ENCODE measurements at regions of chr15 and their contacts with region 1.

Region 1: DNA sequence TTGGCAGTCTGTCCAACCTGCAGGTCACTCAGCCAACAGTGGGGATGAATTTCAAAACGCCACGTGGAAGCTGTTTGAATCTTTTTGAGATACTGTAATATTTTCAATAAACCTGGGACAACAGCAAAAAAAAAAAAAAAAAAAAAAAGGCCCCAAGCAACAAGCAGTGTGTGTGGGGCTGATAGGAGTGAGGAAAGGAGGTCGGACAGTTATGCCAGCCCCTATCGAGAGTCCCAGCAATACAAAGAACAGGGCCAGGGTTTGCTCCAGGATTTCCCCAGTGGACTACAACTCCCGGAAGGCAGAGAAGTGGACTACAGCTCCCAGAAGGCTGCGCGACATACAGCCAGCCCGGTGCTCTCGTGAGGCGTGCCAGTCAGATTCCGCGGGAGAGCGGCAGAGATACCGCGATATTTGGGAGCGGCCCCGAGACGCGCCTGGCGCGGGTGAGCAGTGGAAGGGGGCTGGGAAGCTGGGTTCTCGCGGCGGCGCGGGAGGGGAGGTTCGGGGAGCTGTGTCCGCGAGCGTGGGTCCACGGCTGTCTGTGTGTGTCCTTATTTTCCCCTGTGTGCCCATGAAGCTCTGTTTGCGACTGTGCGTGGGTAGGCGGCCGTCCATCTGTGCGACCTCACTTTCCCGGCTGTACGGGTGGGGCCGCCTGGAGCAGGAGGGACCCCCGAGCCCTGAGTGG is at the start of gene PPCDC:
- DNase-seq: peak; percentile 79 to 94 (median 91)
- ATAC-seq: peak; percentile 100
- H3K4me3 ChIP-seq: peak within 1 kb of the TSS; percentile 84
- H3K4me3 Mint-ChIP-seq: peak within 1 kb of the TSS; percentile 81 to 99 (median 97)
- H3K27ac ChIP-seq: peak within 1 kb of the TSS; percentile 84
- H3K27ac Mint-ChIP-seq: peak within 1 kb of the TSS; percentile 87 to 98 (median 93)
- H3K4me1 ChIP-seq: no peaks in the 10 kb centered on the region
- H3K4me1 Mint-ChIP-seq: peaks cover 11 to 30% (median 26%) of the 10 kb centered on the region in 7 donors
- H3K27me3 ChIP-seq: no peaks in the 10 kb centered on the region
- H3K27me3 Mint-ChIP-seq: no peaks in the 10 kb centered on the region
- total RNA-seq, gene PPCDC: 11.7 to 31.3 (median 17.1) TPM

Region 2: DNA sequence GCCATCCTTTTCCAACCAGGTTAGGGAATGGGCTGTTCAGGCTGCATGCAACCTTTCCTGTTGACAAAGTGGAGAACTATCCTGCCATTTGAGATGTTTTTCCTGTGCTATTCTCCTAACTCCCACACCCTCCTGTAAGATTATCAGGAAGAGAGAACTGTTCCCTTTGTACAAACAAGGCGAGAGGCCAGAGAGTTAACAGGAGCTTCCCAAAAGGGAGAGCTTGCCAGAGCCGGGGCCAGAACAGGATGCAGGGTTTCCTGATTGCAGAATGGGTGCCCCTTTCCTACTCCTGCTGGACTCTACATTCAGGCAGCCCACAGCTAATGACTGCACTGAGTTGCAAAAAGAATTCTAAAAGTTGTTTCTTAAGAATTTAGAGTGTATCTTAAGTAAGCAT is 1011.7 kb before region 1 on chr15:
- CTCF ChIA-PET with region 1: no interaction called
- POLR2A ChIA-PET with region 1: no interaction called
- intact Hi-C with region 1: no loop called
- DNase-seq: no peak
- ATAC-seq: no peak
- H3K4me3 ChIP-seq: no peak overlapping the region
- H3K4me3 Mint-ChIP-seq: peak overlapping the region in 3 of 10 donors; percentile 10 to 29 (median 20)
- H3K27ac ChIP-seq: no peak overlapping the region
- H3K27ac Mint-ChIP-seq: peak overlapping the region in 2 of 9 donors; percentile 39 to 56
- H3K4me1 ChIP-seq: peaks cover 11 to 33% of the 10 kb centered on the region in 2 donors
- H3K4me1 Mint-ChIP-seq: peaks cover 36 to 84% (median 74%) of the 10 kb centered on the region in 7 donors
- H3K27me3 ChIP-seq: no peaks in the 10 kb centered on the region
- H3K27me3 Mint-ChIP-seq: no peaks in the 10 kb centered on the region

Region 3: DNA sequence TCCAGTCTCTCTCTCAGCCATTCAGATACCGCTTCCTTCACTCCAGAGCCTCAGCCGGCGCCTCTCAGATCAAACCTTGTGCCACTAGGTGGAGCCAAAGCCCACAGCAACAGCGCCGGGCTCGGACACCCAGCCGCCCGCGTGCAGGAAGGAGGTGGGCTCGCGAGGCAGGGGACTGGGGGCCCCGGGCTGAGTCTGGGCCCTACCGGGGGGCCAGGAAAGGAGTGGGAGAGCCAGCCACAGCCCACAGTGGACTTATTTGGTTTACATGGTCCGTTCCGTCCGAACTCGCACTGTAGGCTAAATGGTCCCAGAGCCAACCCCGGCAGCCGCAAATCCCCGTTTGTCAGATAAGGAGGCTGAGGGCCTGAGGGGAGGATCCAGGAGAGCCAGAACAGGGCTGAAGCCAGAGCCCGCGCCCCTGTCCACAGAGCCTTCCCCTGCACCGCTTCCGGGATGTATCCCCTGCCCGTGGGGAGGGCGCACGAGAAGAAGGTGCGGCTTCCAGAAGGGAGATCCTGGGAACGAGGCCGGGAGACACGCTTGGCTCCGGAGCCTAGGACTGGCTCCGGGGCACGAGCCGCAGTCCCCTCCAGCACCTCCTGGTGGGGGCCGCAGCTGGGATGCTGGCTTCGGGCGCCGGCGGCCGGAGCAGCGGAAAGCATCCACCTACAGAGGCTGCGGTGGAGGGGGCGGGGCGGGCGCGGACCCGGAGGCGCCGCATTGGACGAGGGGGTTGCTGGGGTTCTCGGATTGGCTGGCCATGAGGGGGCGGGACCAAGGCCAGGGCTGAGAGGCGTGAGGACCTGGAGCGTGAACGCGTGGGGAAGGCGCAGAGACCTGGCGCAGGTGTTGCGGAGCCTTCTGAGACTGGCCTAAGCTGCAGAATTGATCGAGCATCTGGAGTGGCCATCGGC is 649.3 kb before region 1 on chr15:
- CTCF ChIA-PET with region 1: no interaction called
- POLR2A ChIA-PET with region 1: no interaction called
- intact Hi-C with region 1: loop called in 1 of 2 experiments (anchors 2 kb)
- DNase-seq: peak; percentile 82 to 94 (median 91)
- ATAC-seq: peak; percentile 97
- H3K4me3 ChIP-seq: peak overlapping the region; percentile 98
- H3K4me3 Mint-ChIP-seq: peak overlapping the region; percentile 68 to 89 (median 84)
- H3K27ac ChIP-seq: peak overlapping the region; percentile 62
- H3K27ac Mint-ChIP-seq: peak overlapping the region; percentile 18 to 82 (median 40)
- H3K4me1 ChIP-seq: peaks cover 9% of the 10 kb centered on the region in 2 donors
- H3K4me1 Mint-ChIP-seq: peaks cover 0 to 32% (median 15%) of the 10 kb centered on the region in 7 donors
- H3K27me3 ChIP-seq: no peaks in the 10 kb centered on the region
- H3K27me3 Mint-ChIP-seq: peaks cover 0 to 31% (median 5%) of the 10 kb centered on the region in 5 donors

Region 4: GRCh38 chr15:74842581-74843444 is 180.5 kb before region 1 on chr15 and contains the start of gene ULK3:
- CTCF ChIA-PET with region 1: no interaction called
- POLR2A ChIA-PET with region 1: no interaction called
- intact Hi-C with region 1: loop called in 1 of 2 experiments (anchors 2 kb)
- DNase-seq: peak; percentile 89 to 97 (median 93)
- ATAC-seq: peak; percentile 97
- H3K4me3 ChIP-seq: peak within 1 kb of the TSS; percentile 74
- H3K4me3 Mint-ChIP-seq: peak within 1 kb of the TSS; percentile 80 to 95 (median 90)
- H3K27ac ChIP-seq: peak within 1 kb of the TSS; percentile 79
- H3K27ac Mint-ChIP-seq: peak within 1 kb of the TSS; percentile 88 to 95 (median 94)
- H3K4me1 ChIP-seq: peaks cover 40 to 50% of the 10 kb centered on the region in 2 donors
- H3K4me1 Mint-ChIP-seq: peaks cover 26 to 62% (median 50%) of the 10 kb centered on the region in 7 donors
- H3K27me3 ChIP-seq: no peaks in the 10 kb centered on the region
- H3K27me3 Mint-ChIP-seq: no peaks in the 10 kb centered on the region
- total RNA-seq, gene ULK3: 53.2 to 106 (median 59.2) TPM

Region 5: DNA sequence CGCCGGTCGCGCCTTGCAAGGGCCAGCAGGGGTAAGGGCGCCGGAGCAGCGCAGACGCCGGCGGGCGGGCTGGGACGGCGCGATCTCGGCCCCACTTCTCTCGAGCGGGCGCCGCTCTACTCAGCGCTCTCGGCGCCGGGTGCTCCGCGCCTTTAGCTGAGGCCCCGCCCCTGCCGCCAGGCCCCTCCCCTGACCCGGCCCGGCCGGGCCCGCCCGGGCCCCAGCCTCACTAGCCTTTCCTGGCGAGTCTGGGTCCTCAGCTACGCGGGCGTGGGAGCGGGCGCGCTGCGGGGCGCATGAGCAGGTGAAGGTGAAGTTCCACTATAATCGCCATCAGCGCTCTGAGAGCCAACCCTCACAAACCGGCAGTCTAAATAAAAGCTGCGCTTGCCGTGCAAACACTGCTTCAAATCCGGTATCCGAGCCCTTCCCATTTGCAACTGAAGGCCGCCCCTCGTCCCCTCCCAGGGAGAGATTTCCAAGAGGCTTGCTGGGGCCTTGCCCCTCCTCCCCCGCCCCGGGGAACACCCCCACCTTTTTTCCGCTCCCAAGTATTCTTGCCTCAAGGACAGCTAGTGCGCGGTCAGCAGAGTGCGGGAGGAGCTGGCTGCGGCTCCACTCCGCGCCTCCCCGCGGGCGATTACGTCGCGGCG is 66.6 kb before region 1 on chr15 and contains the start of gene RPP25:
- CTCF ChIA-PET with region 1: no interaction called
- POLR2A ChIA-PET with region 1: no interaction called
- intact Hi-C with region 1: loop called in 1 of 2 experiments (anchors 1 kb)
- DNase-seq: peak; percentile 32 to 82 (median 49)
- ATAC-seq: peak; percentile 92
- H3K4me3 ChIP-seq: peak within 1 kb of the TSS; percentile 67
- H3K4me3 Mint-ChIP-seq: peak within 1 kb of the TSS; percentile 68 to 83 (median 81)
- H3K27ac ChIP-seq: peak within 1 kb of the TSS; percentile 1
- H3K27ac Mint-ChIP-seq: no peak within 1 kb of the TSS
- H3K4me1 ChIP-seq: peaks cover 17 to 23% of the 10 kb centered on the region in 2 donors
- H3K4me1 Mint-ChIP-seq: peaks cover 14 to 40% (median 31%) of the 10 kb centered on the region in 7 donors
- H3K27me3 ChIP-seq: peaks cover 9 to 10% of the 10 kb centered on the region in 2 donors
- H3K27me3 Mint-ChIP-seq: peaks cover 25 to 47% (median 27%) of the 10 kb centered on the region in 5 donors
- total RNA-seq, gene RPP25: 0.95 to 5.8 (median 3.3) TPM

Region 6: GRCh38 chr15:75069301-75069925 is 46.1 kb after region 1 on chr15:
- CTCF ChIA-PET with region 1: no interaction called
- POLR2A ChIA-PET with region 1: no interaction called
- intact Hi-C with region 1: no loop called
- DNase-seq: no peak
- ATAC-seq: peak; percentile 84
- H3K4me3 ChIP-seq: no peak overlapping the region
- H3K4me3 Mint-ChIP-seq: peak overlapping the region in 1 of 10 donors; percentile 70
- H3K27ac ChIP-seq: no peak overlapping the region
- H3K27ac Mint-ChIP-seq: peak overlapping the region in 3 of 9 donors; percentile 33 to 97 (median 67)
- H3K4me1 ChIP-seq: peaks cover 12 to 24% of the 10 kb centered on the region in 2 donors
- H3K4me1 Mint-ChIP-seq: peaks cover 19 to 86% (median 26%) of the 10 kb centered on the region in 7 donors
- H3K27me3 ChIP-seq: peaks cover 0 to 3% of the 10 kb centered on the region in 2 donors
- H3K27me3 Mint-ChIP-seq: peaks cover 0 to 13% (median 7%) of the 10 kb centered on the region in 5 donors

Region 7: GRCh38 chr15:75307778-75308391 is 284.6 kb after region 1 on chr15:
- CTCF ChIA-PET with region 1: interaction called, 3 read pairs
- POLR2A ChIA-PET with region 1: no interaction called
- intact Hi-C with region 1: loop called in 1 of 2 experiments (anchors 10 kb)
- DNase-seq: no peak
- ATAC-seq: no peak
- H3K4me3 ChIP-seq: no peak overlapping the region
- H3K4me3 Mint-ChIP-seq: no peak overlapping the region
- H3K27ac ChIP-seq: no peak overlapping the region
- H3K27ac Mint-ChIP-seq: no peak overlapping the region
- H3K4me1 ChIP-seq: no peaks in the 10 kb centered on the region
- H3K4me1 Mint-ChIP-seq: peaks cover 0 to 4% (median 0%) of the 10 kb centered on the region in 7 donors
- H3K27me3 ChIP-seq: no peaks in the 10 kb centered on the region
- H3K27me3 Mint-ChIP-seq: peaks cover 30 to 59% (median 32%) of the 10 kb centered on the region in 5 donors

Region 8: GRCh38 chr15:75639709-75640482 is 616.6 kb after region 1 on chr15 and contains the start of gene IMP3:
- CTCF ChIA-PET with region 1: no interaction called
- POLR2A ChIA-PET with region 1: interaction called, 3 read pairs
- intact Hi-C with region 1: loop called in 1 of 2 experiments (anchors 1 kb)
- DNase-seq: peak; percentile 75 to 96 (median 93)
- ATAC-seq: peak; percentile 95
- H3K4me3 ChIP-seq: peak within 1 kb of the TSS; percentile 97
- H3K4me3 Mint-ChIP-seq: peak within 1 kb of the TSS; percentile 84 to 98 (median 95)
- H3K27ac ChIP-seq: peak within 1 kb of the TSS; percentile 85
- H3K27ac Mint-ChIP-seq: peak within 1 kb of the TSS; percentile 39 to 98 (median 96)
- H3K4me1 ChIP-seq: peaks cover 23 to 24% of the 10 kb centered on the region in 2 donors
- H3K4me1 Mint-ChIP-seq: peaks cover 33 to 49% (median 39%) of the 10 kb centered on the region in 7 donors
- H3K27me3 ChIP-seq: no peaks in the 10 kb centered on the region
- H3K27me3 Mint-ChIP-seq: no peaks in the 10 kb centered on the region
- total RNA-seq, gene IMP3: 32.3 to 100 (median 89.5) TPM

Measured in naive thymus-derived CD4-positive, alpha-beta T cell (primary cell).